ENCODE measurements at regions of chr3 and their contacts with region 1.

Region 1: GRCh38 chr3:72938471-72939265 is 50.8 kb downstream of the GXYLT2 start:
- DNase-seq: peak; percentile 99
- ATAC-seq: peak; percentile 90
- H3K4me3 ChIP-seq: no peak overlapping the region; the same call in 1 of the 2 replicates
- H3K27ac ChIP-seq: peak overlapping the region; percentile 21; the same call in 1 of the 2 replicates
- H3K4me1 ChIP-seq: peaks cover 2% of the 10 kb centered on the region
- H3K27me3 ChIP-seq: no peaks in the 10 kb centered on the region
- CTCF ChIP-seq: peak; percentile 51
- POLR2A ChIP-seq: no peak
- RAD21 ChIP-seq: peak; percentile 39; the same call in 1 of the 2 replicates

Region 2: DNA sequence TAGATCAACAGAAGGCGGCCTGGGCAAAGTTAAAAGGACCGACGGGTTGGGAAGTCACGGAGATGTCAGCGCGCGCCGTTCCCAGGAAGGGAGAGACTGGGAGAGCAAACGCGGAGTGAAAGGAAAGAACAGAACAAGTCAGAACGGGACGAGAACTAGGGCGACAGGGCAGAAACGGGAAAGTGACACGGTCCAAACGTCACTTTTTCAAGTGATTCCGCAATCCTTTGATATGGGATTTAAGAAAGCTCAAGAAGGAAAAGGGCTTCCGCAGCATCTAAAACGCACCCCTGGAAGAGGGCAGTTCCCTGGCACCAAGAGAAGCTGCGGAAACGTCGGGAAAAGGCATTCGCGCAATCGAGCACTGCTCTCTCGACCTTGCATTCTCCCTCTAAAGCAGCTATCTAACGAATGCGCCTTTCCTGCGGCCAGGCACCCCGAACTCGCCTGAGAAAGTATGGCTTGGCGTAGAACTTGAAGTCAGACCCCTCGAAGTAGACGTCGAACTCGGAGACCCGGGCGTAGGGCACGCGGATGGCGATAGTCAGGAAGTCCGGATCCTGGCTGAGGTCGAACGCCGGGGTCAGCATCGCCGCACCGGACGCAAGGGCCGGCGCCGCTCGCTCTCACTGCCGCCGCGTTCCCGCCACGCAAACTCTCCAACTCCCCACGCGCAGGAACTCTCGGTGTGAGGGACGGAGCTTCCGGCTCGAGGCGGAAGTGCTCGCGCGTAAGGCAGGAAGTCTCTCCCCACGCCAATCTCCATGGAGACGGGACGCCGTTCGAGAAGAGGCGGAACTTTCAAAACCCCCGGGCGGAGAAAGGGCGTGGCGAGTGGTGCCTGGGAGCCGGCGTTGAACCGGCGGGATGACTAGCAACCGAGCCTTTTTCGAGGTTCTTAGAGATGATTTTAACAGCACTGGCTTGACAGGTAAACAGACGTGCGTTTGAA is 90.6 kb before region 1 on chr3 and contains the start of gene SHQ1:
- CTCF ChIA-PET with region 1: no interaction called
- POLR2A ChIA-PET with region 1: no interaction called
- dilution Hi-C with region 1: no loop called
- in situ Hi-C with region 1: no loop called
- intact Hi-C with region 1: loop called (anchors 2 kb)
- DNase-seq: peak; percentile 93
- ATAC-seq: peak; percentile 88
- H3K4me3 ChIP-seq: peak within 1 kb of the TSS; percentile 90
- H3K27ac ChIP-seq: peak within 1 kb of the TSS; percentile 65
- H3K4me1 ChIP-seq: no peaks in the 10 kb centered on the region; the same call in 1 of the 2 replicates
- H3K27me3 ChIP-seq: no peaks in the 10 kb centered on the region
- CTCF ChIP-seq: no peak
- POLR2A ChIP-seq: peak; percentile 31; the same call in 1 of the 2 replicates
- RAD21 ChIP-seq: no peak; the same call in 1 of the 2 replicates
- total RNA-seq, gene SHQ1: 19.4 and 28.6 TPM in 2 replicates

Region 3: DNA sequence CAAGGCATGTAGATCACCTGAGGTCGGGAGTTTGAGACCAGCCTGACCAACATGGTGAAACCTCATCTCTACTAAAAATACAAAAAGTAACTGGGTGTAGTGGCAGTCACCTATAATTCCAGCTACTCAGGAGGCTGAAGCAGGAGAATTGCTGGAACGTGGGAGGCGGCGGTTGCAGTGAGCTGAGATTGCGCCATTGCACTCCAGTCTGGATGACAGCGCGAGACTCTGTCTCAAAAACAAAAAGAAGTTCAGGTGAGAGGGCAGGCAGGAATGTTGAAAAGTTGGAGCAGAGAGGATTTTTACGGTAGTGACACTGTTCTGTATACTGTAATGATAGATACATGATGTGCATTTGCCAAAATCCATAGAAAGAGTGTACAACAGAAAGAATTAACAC is 19.1 kb before region 1 on chr3:
- CTCF ChIA-PET with region 1: no interaction called
- POLR2A ChIA-PET with region 1: no interaction called
- dilution Hi-C with region 1: no loop called
- in situ Hi-C with region 1: no loop called
- intact Hi-C with region 1: loop called (anchors 2 kb)
- DNase-seq: no peak
- ATAC-seq: no peak
- H3K4me3 ChIP-seq: no peak overlapping the region
- H3K27ac ChIP-seq: no peak overlapping the region
- H3K4me1 ChIP-seq: no peaks in the 10 kb centered on the region
- H3K27me3 ChIP-seq: no peaks in the 10 kb centered on the region
- CTCF ChIP-seq: no peak
- POLR2A ChIP-seq: no peak
- RAD21 ChIP-seq: no peak

Region 4: GRCh38 chr3:73056014-73056844 is 117.6 kb after region 1 on chr3:
- CTCF ChIA-PET with region 1: interaction called, 6 read pairs
- POLR2A ChIA-PET with region 1: no interaction called
- dilution Hi-C with region 1: no loop called
- in situ Hi-C with region 1: loop called (anchors 5 kb)
- intact Hi-C with region 1: loop called (anchors 1 kb)
- DNase-seq: peak; percentile 62
- ATAC-seq: peak; percentile 65
- H3K4me3 ChIP-seq: no peak overlapping the region
- H3K27ac ChIP-seq: no peak overlapping the region
- H3K4me1 ChIP-seq: no peaks in the 10 kb centered on the region; the same call in 1 of the 2 replicates
- H3K27me3 ChIP-seq: no peaks in the 10 kb centered on the region
- CTCF ChIP-seq: peak; percentile 59
- POLR2A ChIP-seq: no peak
- RAD21 ChIP-seq: peak; percentile 74

Region 5: DNA sequence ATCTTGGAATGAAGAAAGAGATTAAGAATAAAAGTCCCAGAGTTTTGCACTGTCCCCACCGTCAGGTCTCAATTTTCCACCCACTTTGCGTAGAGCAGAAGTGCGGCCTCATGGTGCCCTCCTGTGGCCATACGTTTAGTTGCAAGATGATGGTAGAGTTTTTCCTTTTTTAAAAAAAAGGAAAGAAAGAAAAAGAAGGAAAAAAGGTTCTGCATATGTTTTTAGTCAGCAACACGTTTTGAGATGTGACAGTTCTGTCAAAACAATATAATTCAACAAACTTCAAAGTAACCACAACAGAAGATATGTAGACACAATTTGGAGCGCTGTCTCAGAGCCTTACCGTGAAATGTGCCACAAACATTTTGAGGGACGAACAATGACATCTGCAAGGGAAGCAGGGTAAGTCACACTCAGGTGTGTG is 147.4 kb after region 1 on chr3:
- CTCF ChIA-PET with region 1: interaction called, 3 read pairs
- POLR2A ChIA-PET with region 1: no interaction called
- dilution Hi-C with region 1: no loop called
- in situ Hi-C with region 1: no loop called
- intact Hi-C with region 1: loop called (anchors 1 kb)
- DNase-seq: peak; percentile 43
- ATAC-seq: peak; percentile 92
- H3K4me3 ChIP-seq: no peak overlapping the region
- H3K27ac ChIP-seq: no peak overlapping the region
- H3K4me1 ChIP-seq: peaks cover 2% of the 10 kb centered on the region; the same call in 1 of the 2 replicates
- H3K27me3 ChIP-seq: peaks cover 5% of the 10 kb centered on the region; the same call in 1 of the 2 replicates
- CTCF ChIP-seq: peak; percentile 92
- POLR2A ChIP-seq: no peak
- RAD21 ChIP-seq: peak; percentile 94

Measured in IMR-90 (cell line).